ENCODE measurements at regions of chr5 and their contacts with region 1.

Region 1: GRCh38 chr5:77719666-77720363 is 56.3 kb downstream of the TBCA start:
- DNase-seq: no peak
- ATAC-seq: no peak
- H3K4me3 ChIP-seq: no peak overlapping the region
- H3K27ac ChIP-seq: no peak overlapping the region
- H3K4me1 ChIP-seq: peaks cover 0 to 11% (median 0%) of the 10 kb centered on the region in 9 donors
- H3K27me3 ChIP-seq: no peaks in the 10 kb centered on the region
- CTCF ChIP-seq: no peak

Region 2: DNA sequence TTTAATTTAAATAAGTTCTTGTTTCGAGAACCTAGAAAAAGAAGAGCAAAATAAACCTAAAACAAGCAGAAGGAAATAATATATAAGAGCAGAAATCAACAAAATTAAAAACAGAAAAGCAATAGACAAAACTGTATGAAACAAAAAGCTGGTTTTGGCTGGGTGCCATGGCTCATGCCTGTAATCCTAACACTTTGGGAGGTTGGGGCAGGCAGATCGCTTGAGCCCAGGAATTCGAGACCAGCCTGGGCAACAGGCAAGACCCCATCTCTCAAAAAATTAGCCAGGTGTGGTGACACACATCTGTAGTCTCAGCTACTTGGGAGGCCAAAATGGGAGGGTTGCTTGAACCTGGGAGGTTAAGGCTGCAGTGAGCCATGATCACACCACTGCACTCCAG is 22.1 kb before region 1 on chr5:
- intact Hi-C with region 1: loop called in 1 of 10 experiments (anchors 1 kb)
- DNase-seq: no peak
- ATAC-seq: no peak
- H3K4me3 ChIP-seq: no peak overlapping the region
- H3K27ac ChIP-seq: no peak overlapping the region
- H3K4me1 ChIP-seq: peaks cover 0 to 4% (median 0%) of the 10 kb centered on the region in 9 donors
- H3K27me3 ChIP-seq: no peaks in the 10 kb centered on the region
- CTCF ChIP-seq: no peak

Measured in heart right ventricle (tissue), 16 donors.